Activated CD4-positive, alpha-beta T cell treated with anti-CD3 and anti-CD28 coated beads, Interleukin-2, amount 10 ng/mL, durations not matched to agents 24 days and 14 days (primary cell): ENCODE measurements at regions of chr15 and their contacts with region 1.

Region 1: GRCh38 chr15:83011271-83012075 is at the start of gene C15orf40:
- DNase-seq: peak; percentile 96
- H3K4me3 Mint-ChIP-seq: peak within 1 kb of the TSS; percentile 89
- H3K27ac Mint-ChIP-seq: peak within 1 kb of the TSS; percentile 94
- H3K4me1 Mint-ChIP-seq: peaks cover 40% of the 10 kb centered on the region
- H3K27me3 Mint-ChIP-seq: no peaks in the 10 kb centered on the region
- total RNA-seq, gene C15orf40: 23.6 and 30.8 TPM in 2 replicates

Region 2: DNA sequence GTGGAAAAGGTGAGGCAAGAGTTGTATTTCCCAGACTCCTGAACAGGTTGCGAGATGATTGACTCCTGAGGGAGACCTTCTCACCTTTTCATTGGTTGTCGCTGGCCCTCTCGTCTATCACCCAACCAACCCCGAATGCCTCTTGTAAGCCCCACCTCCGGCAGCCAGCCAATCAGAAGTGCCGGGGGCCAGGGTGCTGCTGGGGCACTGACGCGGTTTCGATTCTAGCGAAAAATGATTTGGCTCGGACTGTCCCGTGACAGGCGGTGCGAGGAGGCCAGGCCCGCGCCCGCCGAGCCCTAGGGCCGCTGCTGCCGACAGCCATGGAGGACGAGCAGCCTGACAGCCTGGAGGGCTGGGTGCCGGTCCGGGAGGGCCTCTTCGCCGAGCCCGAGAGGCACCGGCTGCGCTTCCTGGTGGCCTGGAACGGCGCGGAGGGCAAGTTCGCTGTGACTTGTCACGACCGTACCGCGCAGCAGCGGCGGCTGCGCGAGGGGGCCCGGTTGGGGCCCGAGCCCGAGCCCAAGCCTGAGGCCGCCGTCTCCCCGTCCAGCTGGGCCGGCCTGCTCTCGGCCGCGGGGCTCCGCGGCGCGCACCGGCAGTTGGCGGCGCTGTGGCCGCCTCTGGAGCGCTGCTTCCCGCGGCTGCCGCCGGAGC is 201.9 kb before region 1 on chr15 and contains the start of gene WHAMM:
- intact Hi-C with region 1: loop called (anchors 5 kb)
- DNase-seq: peak; percentile 99
- H3K4me3 Mint-ChIP-seq: peak within 1 kb of the TSS; percentile 88
- H3K27ac Mint-ChIP-seq: peak within 1 kb of the TSS; percentile 95
- H3K4me1 Mint-ChIP-seq: peaks cover 20% of the 10 kb centered on the region
- H3K27me3 Mint-ChIP-seq: peaks cover 14% of the 10 kb centered on the region
- total RNA-seq, gene WHAMM: 5.1 and 6.7 TPM in 2 replicates

Region 3: DNA sequence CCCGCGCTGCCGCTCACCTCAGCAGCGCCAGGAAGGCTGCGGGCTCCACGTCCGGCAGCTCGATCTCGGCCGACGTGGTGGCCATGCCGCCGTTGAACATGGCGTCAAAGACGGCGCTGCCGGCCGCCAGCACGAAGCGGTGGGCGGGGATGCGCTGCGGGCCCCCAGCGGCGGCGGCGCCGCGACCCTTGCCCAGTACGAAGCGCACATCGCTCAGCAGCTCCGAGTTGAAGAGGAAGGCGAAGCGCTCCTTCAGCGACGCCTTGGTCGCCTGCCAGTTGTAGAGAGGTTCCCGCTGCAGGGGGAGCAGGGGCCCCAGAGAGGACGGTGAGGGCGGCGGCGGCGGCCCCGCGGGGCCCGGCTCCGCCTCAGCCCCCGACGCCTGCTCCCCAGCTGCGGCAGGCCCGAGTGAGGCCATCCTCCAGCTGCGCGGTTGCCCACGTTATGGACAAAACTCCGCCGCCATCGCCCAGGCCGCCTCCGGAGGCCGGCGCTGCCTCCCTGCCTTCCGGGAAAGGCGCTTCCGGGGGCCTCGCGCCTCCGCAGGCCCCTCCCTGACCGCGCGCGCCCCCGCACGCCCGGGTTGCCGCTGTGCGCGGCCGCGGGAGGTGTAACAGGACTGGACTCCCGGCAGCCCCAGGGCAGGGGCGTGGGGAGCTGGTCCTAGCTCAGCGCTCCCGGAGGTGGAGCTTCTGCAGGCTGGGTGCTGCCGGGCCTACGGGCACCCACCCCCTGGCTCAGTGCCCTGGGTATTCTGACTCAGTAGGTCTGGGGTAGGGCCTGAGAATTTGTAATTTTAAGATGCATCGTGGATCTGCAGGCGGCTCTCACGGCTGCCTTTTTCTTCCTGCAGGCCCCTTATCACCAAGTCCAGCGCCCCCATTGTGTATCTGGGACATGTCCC is 55.5 kb after region 1 on chr15 and contains the start of gene BTBD1:
- intact Hi-C with region 1: loop called (anchors 2 kb)
- DNase-seq: peak; percentile 96
- H3K4me3 Mint-ChIP-seq: peak within 1 kb of the TSS; percentile 54
- H3K27ac Mint-ChIP-seq: peak within 1 kb of the TSS; percentile 87
- H3K4me1 Mint-ChIP-seq: peaks cover 24% of the 10 kb centered on the region
- H3K27me3 Mint-ChIP-seq: peaks cover 1% of the 10 kb centered on the region
- total RNA-seq, gene BTBD1: 61.7 and 62.7 TPM in 2 replicates

Region 4: GRCh38 chr15:83207622-83208411 is 196.3 kb after region 1 on chr15 and contains the start of gene HDGFL3:
- intact Hi-C with region 1: loop called (anchors 1 kb)
- DNase-seq: peak; percentile 83
- H3K4me3 Mint-ChIP-seq: peak within 1 kb of the TSS; percentile 90
- H3K27ac Mint-ChIP-seq: peak within 1 kb of the TSS; percentile 91
- H3K4me1 Mint-ChIP-seq: peaks cover 11% of the 10 kb centered on the region
- H3K27me3 Mint-ChIP-seq: peaks cover 28% of the 10 kb centered on the region
- total RNA-seq, gene HDGFL3: 34.6 and 38.7 TPM in 2 replicates

Region 5: GRCh38 chr15:83380682-83381081 is 369.2 kb after region 1 on chr15:
- intact Hi-C with region 1: loop called (anchors 2 kb)
- DNase-seq: peak; percentile 81
- H3K4me3 Mint-ChIP-seq: no peak overlapping the region
- H3K27ac Mint-ChIP-seq: no peak overlapping the region
- H3K4me1 Mint-ChIP-seq: peaks cover 6% of the 10 kb centered on the region
- H3K27me3 Mint-ChIP-seq: peaks cover 34% of the 10 kb centered on the region